Activated CD8-positive, alpha-beta T cell treated with anti-CD3 and anti-CD28 coated beads for 36 hours (primary cell): ENCODE measurements at regions of chr3 and their contacts with region 1.

Region 1: GRCh38 chr3:141553055-141553454 is 66.2 kb downstream of the RASA2 start:
- DNase-seq: peak; percentile 25
- ATAC-seq: peak; percentile 71
- H3K4me3 Mint-ChIP-seq: peak overlapping the region; percentile 2
- H3K27ac Mint-ChIP-seq: peak overlapping the region; percentile 91
- H3K4me1 Mint-ChIP-seq: peaks cover 56% of the 10 kb centered on the region
- H3K27me3 Mint-ChIP-seq: no peaks in the 10 kb centered on the region
- CTCF ChIP-seq: no peak

Region 2: GRCh38 chr3:141493184-141493583 is 59.9 kb before region 1 on chr3:
- CTCF ChIA-PET with region 1: interaction called, 74 read pairs
- POLR2A ChIA-PET with region 1: interaction called, 99 read pairs
- intact Hi-C with region 1: loop called (anchors 2 kb)
- DNase-seq: no peak
- ATAC-seq: peak; percentile 72
- H3K4me3 Mint-ChIP-seq: peak overlapping the region; percentile 25
- H3K27ac Mint-ChIP-seq: peak overlapping the region; percentile 70
- H3K4me1 Mint-ChIP-seq: peaks cover 87% of the 10 kb centered on the region
- H3K27me3 Mint-ChIP-seq: no peaks in the 10 kb centered on the region
- CTCF ChIP-seq: no peak

Region 3: DNA sequence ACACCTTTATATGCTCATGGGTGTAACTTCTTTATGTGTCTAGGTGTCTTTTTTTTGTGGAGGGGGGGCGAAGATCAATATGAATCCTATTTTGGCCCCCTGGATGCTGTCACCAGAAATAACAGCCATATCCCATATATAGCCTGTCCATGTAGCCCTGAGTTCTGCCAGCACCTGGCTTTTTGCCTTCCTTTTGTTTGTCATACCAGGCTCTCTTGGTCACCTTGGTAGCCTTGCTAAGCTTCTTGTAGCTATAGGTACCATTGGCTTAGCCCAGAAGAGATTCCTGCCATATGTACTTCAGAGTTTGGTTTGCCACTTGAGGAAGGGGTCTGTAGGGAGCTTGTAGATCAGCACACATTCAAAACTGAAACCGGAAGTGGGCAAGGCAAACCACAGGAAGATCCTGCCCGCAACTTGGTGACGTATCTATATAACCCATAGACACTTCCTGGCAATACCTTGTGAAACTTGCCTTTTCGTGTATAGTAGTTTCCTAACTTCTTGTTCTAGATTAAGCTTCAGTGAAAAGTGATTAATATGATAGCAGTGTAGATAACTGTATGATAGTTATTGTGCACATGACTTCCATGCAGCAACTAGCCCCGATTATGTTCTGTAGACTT is 54.3 kb before region 1 on chr3:
- CTCF ChIA-PET with region 1: interaction called, 8 read pairs
- POLR2A ChIA-PET with region 1: interaction called, 15 read pairs
- intact Hi-C with region 1: loop called (anchors 2 kb)
- DNase-seq: peak; percentile 95
- ATAC-seq: peak; percentile 83
- H3K4me3 Mint-ChIP-seq: peak overlapping the region; percentile 63
- H3K27ac Mint-ChIP-seq: peak overlapping the region; percentile 97
- H3K4me1 Mint-ChIP-seq: peaks cover 67% of the 10 kb centered on the region
- H3K27me3 Mint-ChIP-seq: no peaks in the 10 kb centered on the region
- CTCF ChIP-seq: no peak